Posterior vena cava (tissue), 2 donors: ENCODE measurements at regions of chr12 and their contacts with region 1.

Region 1: GRCh38 chr12:95998611-95999286 is 2.6 kb upstream of the HAL start:
- DNase-seq: no peak

Region 2: GRCh38 chr12:95922231-95922630 is 76.5 kb before region 1 on chr12:
- intact Hi-C with region 1: loop called in 1 of 2 experiments (anchors 5 kb)
- DNase-seq: no peak

Region 3: GRCh38 chr12:96033549-96034389 is 35.0 kb after region 1 on chr12:
- intact Hi-C with region 1: no loop called
- DNase-seq: no peak

Region 4: GRCh38 chr12:96078231-96079135 is 79.7 kb after region 1 on chr12:
- intact Hi-C with region 1: no loop called
- DNase-seq: peak; percentile 88

Region 5: DNA sequence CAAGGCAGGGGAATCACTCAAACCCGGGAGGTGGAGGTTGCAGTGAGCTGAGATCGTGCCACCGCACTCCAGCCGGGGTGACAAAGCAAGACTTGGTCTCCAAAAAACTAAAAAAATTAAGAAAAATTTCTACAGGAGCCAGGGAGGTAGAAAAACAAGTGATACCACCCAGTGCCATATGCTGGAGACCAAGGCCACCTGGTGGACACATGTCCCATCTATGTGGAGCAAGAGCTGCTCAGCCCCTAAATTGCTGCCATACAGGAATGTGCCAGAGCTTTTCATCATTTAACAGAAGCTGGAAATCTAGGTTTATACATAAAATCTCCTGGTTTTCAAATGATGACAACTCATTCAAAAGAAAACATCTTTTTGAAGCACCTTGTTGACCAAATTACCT is 134.1 kb after region 1 on chr12:
- intact Hi-C with region 1: no loop called
- DNase-seq: no peak

Region 6: GRCh38 chr12:96194971-96195844 is 196.5 kb after region 1 on chr12:
- intact Hi-C with region 1: no loop called
- DNase-seq: no peak